AG04450 (cell line): ENCODE measurements at regions of chr9 and their contacts with region 1.

Region 1: GRCh38 chr9:124708633-124709291 is 62.3 kb downstream of the NR6A1 start:
- DNase-seq: no peak
- H3K4me3 ChIP-seq: no peak overlapping the region
- H3K27ac ChIP-seq: no peak overlapping the region
- H3K27me3 ChIP-seq: no peaks in the 10 kb centered on the region
- CTCF ChIP-seq: no peak

Region 2: DNA sequence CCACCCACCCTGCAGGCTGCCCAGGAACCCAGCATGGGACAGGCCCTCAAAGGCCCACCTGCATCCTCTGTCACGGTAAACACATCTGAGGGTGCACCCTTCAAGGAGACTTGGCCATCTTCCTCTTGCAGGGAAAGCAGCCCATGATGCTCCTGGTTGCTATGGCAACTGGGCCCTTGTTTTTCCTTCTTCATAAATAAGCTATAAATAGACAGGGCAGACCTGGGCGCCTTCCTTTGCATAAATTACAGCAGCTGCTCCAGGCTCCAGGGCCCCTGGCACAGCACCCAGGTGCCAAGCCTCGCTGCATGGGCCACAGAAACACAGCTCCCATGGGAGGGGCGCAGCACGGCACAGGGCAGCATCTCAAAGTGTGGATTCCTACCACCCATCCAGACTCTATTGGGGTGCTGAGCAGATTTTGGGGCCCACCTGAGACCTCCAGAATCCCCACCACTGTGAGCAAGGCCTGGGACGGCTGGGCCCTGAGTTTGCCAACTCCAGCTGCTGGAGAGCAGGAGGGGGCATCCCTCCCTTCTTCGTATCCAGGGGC is 287.7 kb before region 1 on chr9:
- CTCF ChIA-PET with region 1: interaction called, 19 read pairs
- POLR2A ChIA-PET with region 1: no interaction called
- DNase-seq: no peak
- H3K4me3 ChIP-seq: no peak overlapping the region
- H3K27ac ChIP-seq: no peak overlapping the region
- H3K27me3 ChIP-seq: peaks cover 8% of the 10 kb centered on the region
- CTCF ChIP-seq: no peak

Region 3: DNA sequence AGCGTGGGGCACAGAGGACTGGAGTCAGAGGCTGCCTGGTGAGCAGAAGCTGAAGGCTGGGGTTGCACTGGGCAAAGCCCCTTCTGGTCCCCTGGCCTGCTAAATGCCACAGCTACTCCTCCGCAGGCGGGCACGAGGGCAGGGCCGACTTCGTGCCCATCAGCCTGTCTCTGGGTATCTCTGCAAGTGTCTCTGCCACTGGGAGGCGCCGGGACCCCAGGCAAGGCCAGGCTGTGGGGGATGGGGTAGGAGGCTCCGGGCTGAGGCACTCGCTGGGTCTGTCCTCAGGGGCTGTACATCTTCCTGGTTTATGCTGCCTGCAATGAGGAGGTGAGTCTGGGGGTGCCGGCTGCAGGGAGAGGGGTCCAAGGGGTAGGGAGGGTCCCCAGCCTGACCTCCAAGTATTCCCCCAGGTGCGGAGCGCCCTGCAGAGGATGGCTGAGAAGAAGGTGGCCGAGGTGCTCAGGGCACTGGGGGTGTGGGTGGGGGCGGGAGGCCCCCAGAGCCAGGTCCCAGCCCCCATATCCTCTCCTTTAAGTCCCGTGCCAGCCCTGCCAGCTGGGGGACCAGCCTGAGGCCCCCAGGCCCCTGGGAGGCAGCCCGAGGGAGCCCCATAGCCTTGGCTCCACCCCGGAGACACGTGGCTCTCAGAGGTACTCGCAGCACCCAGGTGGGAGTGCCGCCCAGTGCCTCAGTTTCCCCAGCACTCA is 233.4 kb before region 1 on chr9:
- CTCF ChIA-PET with region 1: no interaction called
- POLR2A ChIA-PET with region 1: no interaction called
- DNase-seq: no peak
- H3K4me3 ChIP-seq: no peak overlapping the region
- H3K27ac ChIP-seq: no peak overlapping the region
- H3K27me3 ChIP-seq: peaks cover 64% of the 10 kb centered on the region
- CTCF ChIP-seq: no peak

Region 4: DNA sequence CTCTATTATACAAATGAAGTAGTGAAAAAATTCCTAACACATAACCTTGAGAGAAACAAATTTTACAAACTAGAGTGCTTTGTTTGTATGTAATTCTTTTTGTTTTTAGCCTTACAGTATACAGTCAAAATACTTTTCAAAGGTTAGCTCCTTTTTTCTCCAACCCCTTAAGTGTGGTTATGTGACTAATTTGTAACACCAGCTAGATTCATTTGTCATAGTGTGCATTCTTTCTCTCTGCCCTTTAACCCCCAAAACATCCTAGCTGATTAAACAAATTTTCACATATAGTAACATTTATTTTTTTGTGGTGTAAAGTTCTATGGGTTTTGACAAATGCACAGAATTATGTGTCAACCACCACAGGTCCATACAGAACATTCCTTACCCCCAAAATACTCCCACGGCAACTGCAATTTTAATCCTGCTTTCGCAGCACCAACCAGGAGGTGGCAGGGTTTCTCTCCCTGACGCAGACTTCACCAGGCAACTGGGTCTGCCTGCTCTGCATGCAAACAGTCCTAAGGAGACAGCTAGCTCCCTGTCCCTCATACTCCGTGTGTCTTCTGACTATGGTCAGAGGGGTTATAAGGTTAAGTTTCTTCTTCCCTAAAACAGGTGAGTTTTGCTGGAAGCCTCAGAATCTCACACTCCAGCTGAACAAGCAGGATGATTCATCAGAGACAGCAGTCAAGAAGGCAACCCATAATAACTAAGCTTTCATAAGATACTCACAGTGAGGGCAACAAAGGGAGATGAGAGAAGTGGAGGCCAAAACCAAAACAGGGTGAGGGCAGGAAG is 157.1 kb before region 1 on chr9:
- CTCF ChIA-PET with region 1: interaction called, 84 read pairs
- POLR2A ChIA-PET with region 1: no interaction called
- DNase-seq: peak; percentile 34
- H3K4me3 ChIP-seq: no peak overlapping the region
- H3K27ac ChIP-seq: no peak overlapping the region
- H3K27me3 ChIP-seq: peaks cover 6% of the 10 kb centered on the region
- CTCF ChIP-seq: peak; percentile 87

Region 5: GRCh38 chr9:124658165-124659017 is 50.4 kb before region 1 on chr9:
- CTCF ChIA-PET with region 1: interaction called, 4 read pairs
- POLR2A ChIA-PET with region 1: interaction called, 17 read pairs
- DNase-seq: peak; percentile 93
- H3K4me3 ChIP-seq: peak overlapping the region; percentile 71
- H3K27ac ChIP-seq: peak overlapping the region; percentile 93
- H3K27me3 ChIP-seq: no peaks in the 10 kb centered on the region
- CTCF ChIP-seq: no peak

Region 6: GRCh38 chr9:124721109-124721906 is 12.5 kb after region 1 on chr9:
- CTCF ChIA-PET with region 1: interaction called, 40 read pairs
- POLR2A ChIA-PET with region 1: no interaction called
- DNase-seq: no peak
- H3K4me3 ChIP-seq: no peak overlapping the region
- H3K27ac ChIP-seq: no peak overlapping the region
- H3K27me3 ChIP-seq: no peaks in the 10 kb centered on the region
- CTCF ChIP-seq: no peak

Region 7: GRCh38 chr9:124754289-124754688 is 45.5 kb after region 1 on chr9:
- CTCF ChIA-PET with region 1: interaction called, 15 read pairs
- POLR2A ChIA-PET with region 1: no interaction called
- DNase-seq: no peak
- H3K4me3 ChIP-seq: no peak overlapping the region
- H3K27ac ChIP-seq: no peak overlapping the region
- H3K27me3 ChIP-seq: peaks cover 15% of the 10 kb centered on the region
- CTCF ChIP-seq: peak; percentile 80